ENCODE measurements at regions of chr5 and their contacts with region 1.

Region 1: GRCh38 chr5:103490074-103490739 is 72.4 kb downstream of the NUDT12 start:
- DNase-seq: no peak
- ATAC-seq: no peak
- H3K4me3 ChIP-seq: no peak overlapping the region
- H3K27ac ChIP-seq: no peak overlapping the region
- H3K4me1 ChIP-seq: no peaks in the 10 kb centered on the region
- H3K27me3 ChIP-seq: no peaks in the 10 kb centered on the region
- CTCF ChIP-seq: no peak
- POLR2A ChIP-seq: no peak

Region 2: DNA sequence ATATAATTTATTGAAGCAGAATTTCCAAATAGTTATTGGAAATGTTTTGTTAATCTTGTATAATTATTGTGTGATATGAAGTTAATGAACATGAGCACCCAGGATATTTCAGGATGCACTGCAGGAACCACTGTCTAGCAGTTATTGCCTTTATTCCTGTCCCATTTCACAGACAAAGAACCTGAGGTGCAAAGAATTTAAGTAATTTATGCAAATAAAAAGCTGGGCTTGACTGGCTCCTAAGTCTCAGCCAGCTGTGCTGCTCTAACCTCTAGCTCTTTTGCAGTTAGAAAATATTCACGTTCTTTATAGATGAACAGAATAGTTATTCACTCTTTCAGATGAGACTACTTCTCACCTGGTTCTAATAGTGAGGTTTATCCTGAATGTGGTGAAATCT is 122.3 kb after region 1 on chr5:
- intact Hi-C with region 1: loop called in 1 of 10 experiments (anchors 5 kb)
- DNase-seq: no peak
- ATAC-seq: no peak
- H3K4me3 ChIP-seq: no peak overlapping the region
- H3K27ac ChIP-seq: no peak overlapping the region
- H3K4me1 ChIP-seq: no peaks in the 10 kb centered on the region
- H3K27me3 ChIP-seq: no peaks in the 10 kb centered on the region
- CTCF ChIP-seq: no peak
- POLR2A ChIP-seq: no peak

Region 3: GRCh38 chr5:104178829-104179456 is 688.7 kb after region 1 on chr5:
- intact Hi-C with region 1: no loop called
- DNase-seq: peak in 1 of 5 donors; percentile 16
- ATAC-seq: no peak
- H3K4me3 ChIP-seq: no peak overlapping the region
- H3K27ac ChIP-seq: no peak overlapping the region
- H3K4me1 ChIP-seq: no peaks in the 10 kb centered on the region
- H3K27me3 ChIP-seq: no peaks in the 10 kb centered on the region
- CTCF ChIP-seq: peak in 10 of 12 donors; percentile 8 to 50 (median 24)
- POLR2A ChIP-seq: no peak

Measured in heart left ventricle (tissue), 16 donors.